ENCODE measurements at regions of chr12 and their contacts with region 1.

Region 1: GRCh38 chr12:54749191-54749818 is 101.1 kb upstream of the DCD start:
- DNase-seq: peak; percentile 22
- H3K4me3 Mint-ChIP-seq: peak overlapping the region; percentile 17
- H3K27ac Mint-ChIP-seq: no peak overlapping the region
- H3K4me1 Mint-ChIP-seq: peaks cover 20% of the 10 kb centered on the region
- H3K27me3 Mint-ChIP-seq: no peaks in the 10 kb centered on the region

Region 2: GRCh38 chr12:54716261-54716660 is 33.0 kb before region 1 on chr12:
- CTCF ChIA-PET with region 1: interaction called, 12 read pairs
- POLR2A ChIA-PET with region 1: no interaction called
- intact Hi-C with region 1: no loop called
- DNase-seq: no peak
- H3K4me3 Mint-ChIP-seq: no peak overlapping the region
- H3K27ac Mint-ChIP-seq: no peak overlapping the region
- H3K4me1 Mint-ChIP-seq: no peaks in the 10 kb centered on the region
- H3K27me3 Mint-ChIP-seq: peaks cover 10% of the 10 kb centered on the region

Region 3: DNA sequence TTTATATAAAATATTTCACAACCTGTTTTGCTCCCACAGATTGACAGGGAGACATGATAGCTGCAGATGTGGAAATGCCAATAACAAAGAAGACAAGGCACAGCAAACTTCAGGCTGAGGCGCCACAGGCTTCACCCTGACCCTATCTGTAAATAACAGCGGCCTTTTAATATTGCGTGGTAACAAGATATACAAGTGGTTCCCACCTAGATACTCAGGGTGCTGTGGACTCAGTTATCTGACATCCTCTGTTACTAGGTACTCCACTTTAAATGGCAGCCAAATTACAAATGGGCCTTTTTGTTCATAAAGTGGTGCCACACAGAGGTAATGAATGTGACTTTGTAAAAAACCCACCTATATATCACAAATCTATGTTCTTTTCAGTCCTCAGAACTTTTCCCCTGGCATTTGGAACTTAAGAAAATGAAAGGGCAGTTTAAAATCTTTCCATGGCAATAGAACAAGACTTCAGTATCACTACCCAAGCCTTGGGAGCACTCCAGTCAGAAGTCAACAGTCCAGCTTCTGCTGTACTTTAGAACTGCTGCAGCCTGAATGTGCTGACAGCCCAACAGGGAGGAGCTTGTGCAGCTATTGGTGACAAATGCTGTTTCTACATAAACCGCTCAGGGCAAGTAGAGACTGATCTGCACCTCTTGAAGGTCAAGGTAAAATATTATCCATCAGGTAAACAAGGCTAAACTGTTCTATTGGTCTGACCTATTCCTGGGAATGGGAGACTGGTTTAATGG is 14.9 kb before region 1 on chr12:
- CTCF ChIA-PET with region 1: interaction called, 18 read pairs
- POLR2A ChIA-PET with region 1: no interaction called
- intact Hi-C with region 1: no loop called
- DNase-seq: no peak
- H3K4me3 Mint-ChIP-seq: no peak overlapping the region
- H3K27ac Mint-ChIP-seq: no peak overlapping the region
- H3K4me1 Mint-ChIP-seq: peaks cover 25% of the 10 kb centered on the region
- H3K27me3 Mint-ChIP-seq: no peaks in the 10 kb centered on the region

Region 4: GRCh38 chr12:54853995-54854566 is 104.8 kb after region 1 on chr12 and contains the start of gene MUCL1:
- CTCF ChIA-PET with region 1: interaction called, 22 read pairs
- POLR2A ChIA-PET with region 1: no interaction called
- intact Hi-C with region 1: loop called (anchors 5 kb)
- DNase-seq: peak; percentile 80
- H3K4me3 Mint-ChIP-seq: no peak within 1 kb of the TSS
- H3K27ac Mint-ChIP-seq: no peak within 1 kb of the TSS
- H3K4me1 Mint-ChIP-seq: peaks cover 17% of the 10 kb centered on the region
- H3K27me3 Mint-ChIP-seq: peaks cover 2% of the 10 kb centered on the region
- total RNA-seq, gene MUCL1: not detected

Region 5: GRCh38 chr12:54958048-54958658 is 208.8 kb after region 1 on chr12:
- CTCF ChIA-PET with region 1: interaction called, 136 read pairs
- POLR2A ChIA-PET with region 1: no interaction called
- intact Hi-C with region 1: loop called (anchors 1 kb)
- DNase-seq: peak; percentile 55
- H3K4me3 Mint-ChIP-seq: no peak overlapping the region
- H3K27ac Mint-ChIP-seq: peak overlapping the region; percentile 93
- H3K4me1 Mint-ChIP-seq: peaks cover 86% of the 10 kb centered on the region
- H3K27me3 Mint-ChIP-seq: no peaks in the 10 kb centered on the region

Region 6: DNA sequence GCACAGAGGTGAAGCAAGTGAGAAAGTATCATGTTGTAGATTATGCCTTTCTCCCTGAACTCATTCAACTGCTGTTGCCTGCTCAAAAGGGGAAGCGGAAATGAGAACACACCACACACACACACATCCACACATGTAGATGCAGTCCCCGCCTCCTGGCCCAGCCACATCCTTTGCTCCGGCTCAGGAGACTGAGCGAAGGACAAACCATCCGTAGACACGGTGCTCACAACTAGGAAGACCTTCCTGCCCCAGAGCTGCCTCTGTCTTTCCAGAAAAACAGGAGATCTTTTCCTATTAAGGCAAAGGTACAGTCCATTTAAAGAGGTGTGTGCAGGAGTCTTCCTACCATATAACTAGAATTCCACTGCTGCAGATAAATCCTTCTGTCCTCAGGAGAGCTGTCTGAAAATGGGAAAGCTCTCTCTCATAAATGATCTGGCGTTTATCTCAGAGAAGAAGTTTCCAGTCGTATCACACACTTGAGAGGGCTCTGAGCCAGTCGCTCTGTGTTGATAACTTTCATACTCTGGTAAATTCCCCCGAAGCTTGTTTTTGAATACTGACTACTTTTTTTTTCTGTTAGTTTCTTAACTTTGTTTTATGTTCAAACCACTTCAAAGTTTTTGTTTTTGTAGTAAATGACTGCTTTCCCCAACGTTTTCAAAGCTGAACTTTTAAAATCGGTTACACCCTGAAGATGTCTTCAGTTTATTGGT is 235.5 kb after region 1 on chr12 and contains the start of gene TESPA1:
- CTCF ChIA-PET with region 1: interaction called, 19 read pairs
- POLR2A ChIA-PET with region 1: no interaction called
- intact Hi-C with region 1: loop called (anchors 5 kb)
- DNase-seq: peak; percentile 93
- H3K4me3 Mint-ChIP-seq: peak within 1 kb of the TSS; percentile 79
- H3K27ac Mint-ChIP-seq: peak within 1 kb of the TSS; percentile 90
- H3K4me1 Mint-ChIP-seq: peaks cover 68% of the 10 kb centered on the region
- H3K27me3 Mint-ChIP-seq: no peaks in the 10 kb centered on the region
- total RNA-seq, gene TESPA1: 73.9 to 74.8 TPM

Region 7: DNA sequence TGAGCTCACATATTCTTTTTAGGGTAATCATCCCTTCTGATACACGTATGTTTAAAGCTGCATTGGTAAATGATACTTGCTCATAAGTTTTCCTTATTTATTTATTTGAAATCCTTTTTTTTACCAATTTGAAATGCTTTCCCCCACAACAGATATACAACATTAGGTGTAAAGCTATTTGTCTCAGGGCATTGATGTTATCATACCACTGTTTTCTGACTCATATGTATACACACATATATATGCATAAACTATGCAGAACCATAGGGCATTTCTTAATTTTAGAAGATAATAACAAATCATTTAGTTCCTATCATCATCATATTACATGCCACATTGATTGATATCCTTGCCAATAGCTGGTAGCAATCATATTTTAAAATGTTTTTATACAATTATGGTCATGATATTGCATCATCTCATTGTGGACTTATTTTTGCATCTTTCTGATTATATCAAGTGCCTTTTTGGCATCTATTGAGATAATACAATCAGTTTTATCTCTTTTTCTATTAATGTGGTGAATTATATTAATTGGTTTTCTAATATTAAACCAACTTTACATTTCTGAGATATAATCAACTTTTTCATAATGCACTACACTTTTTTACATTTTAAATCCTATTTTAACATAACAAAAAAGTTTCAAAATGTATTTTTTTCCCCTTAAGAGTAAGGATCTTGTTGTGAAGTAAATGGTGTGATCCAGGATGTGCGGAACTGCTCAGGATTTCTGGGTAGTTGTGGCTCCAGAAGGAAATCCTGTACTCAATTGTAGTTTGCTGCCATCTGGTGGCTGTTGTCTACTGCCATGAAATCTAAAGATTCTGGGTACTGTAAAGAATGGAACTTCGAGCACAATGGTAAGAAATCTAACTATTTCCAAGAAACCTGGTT is 393.6 kb after region 1 on chr12:
- CTCF ChIA-PET with region 1: interaction called, 12 read pairs
- POLR2A ChIA-PET with region 1: no interaction called
- intact Hi-C with region 1: loop called (anchors 10 kb)
- DNase-seq: peak; percentile 41
- H3K4me3 Mint-ChIP-seq: no peak overlapping the region
- H3K27ac Mint-ChIP-seq: no peak overlapping the region
- H3K4me1 Mint-ChIP-seq: peaks cover 5% of the 10 kb centered on the region
- H3K27me3 Mint-ChIP-seq: no peaks in the 10 kb centered on the region

Region 8: DNA sequence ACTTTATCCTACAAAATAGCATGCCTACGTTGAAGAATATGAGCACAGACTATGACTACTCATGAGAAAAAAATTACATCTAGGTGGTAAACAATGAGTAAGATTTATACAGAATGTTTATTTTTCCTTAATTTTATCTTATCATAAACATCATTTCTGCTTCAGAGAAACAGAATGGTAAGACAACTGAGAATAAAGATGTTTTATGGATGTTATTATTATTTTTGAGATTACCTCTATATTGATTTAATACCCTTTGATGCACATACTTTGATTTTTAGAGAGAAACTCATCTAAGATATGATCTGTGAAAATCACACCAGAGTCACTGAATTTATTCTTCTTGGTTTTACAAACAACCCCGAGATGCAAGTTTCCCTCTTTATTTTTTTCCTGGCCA is 471.4 kb after region 1 on chr12 and contains the start of gene OR10A7:
- CTCF ChIA-PET with region 1: no interaction called
- POLR2A ChIA-PET with region 1: no interaction called
- intact Hi-C with region 1: no loop called
- DNase-seq: no peak
- H3K4me3 Mint-ChIP-seq: no peak within 1 kb of the TSS
- H3K27ac Mint-ChIP-seq: no peak within 1 kb of the TSS
- H3K4me1 Mint-ChIP-seq: no peaks in the 10 kb centered on the region
- H3K27me3 Mint-ChIP-seq: peaks cover 15% of the 10 kb centered on the region
- total RNA-seq, gene OR10A7: not detected

Measured in activated CD4-positive, alpha-beta memory T cell treated with anti-CD3 and anti-CD28 coated beads for 36 hours (primary cell).